Lower leg skin (tissue), 4 donors: ENCODE measurements at regions of chr2 and their contacts with region 1.

Region 1: GRCh38 chr2:205766779-205767359 is 84.6 kb downstream of the NRP2 start:
- DNase-seq: peak in 1 of 2 donors; percentile 58
- H3K4me3 ChIP-seq: no peak overlapping the region
- CTCF ChIP-seq: no peak
- POLR2A ChIP-seq: no peak

Region 2: DNA sequence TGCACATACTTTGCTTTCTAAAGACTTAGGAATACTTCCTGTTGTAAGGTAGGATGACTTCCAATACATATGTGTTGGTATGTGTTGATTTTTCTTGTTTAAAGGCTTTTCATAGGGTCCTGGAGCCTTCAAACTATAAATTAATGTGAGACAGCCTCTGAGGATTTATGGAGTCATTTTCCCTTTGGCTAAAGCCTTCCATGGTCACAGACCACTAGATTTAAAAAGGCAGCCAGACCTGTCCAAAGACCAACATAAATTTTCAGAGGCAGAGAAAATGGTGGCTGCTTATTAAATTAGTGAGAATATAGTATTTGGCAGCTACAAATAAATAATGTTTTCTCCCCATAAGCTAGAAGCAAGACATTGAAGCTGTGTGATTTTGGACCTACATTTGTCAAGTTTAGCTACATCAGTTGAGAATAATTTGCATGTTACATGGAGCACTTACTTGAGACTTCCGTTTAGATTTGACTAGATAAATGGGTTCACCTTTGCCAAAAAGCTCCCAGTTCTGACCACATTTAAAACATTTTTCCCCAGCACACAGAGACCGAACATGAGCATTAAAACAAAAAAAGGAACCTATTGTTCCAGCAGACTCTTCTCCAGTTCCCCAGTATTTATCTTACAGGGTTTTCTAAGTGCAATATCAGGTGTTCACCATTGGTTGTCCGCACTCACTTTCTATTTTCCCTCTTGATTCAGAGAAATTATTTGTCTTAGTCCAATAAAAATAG is 818.7 kb before region 1 on chr2:
- intact Hi-C with region 1: no loop called
- DNase-seq: no peak
- H3K4me3 ChIP-seq: no peak overlapping the region
- CTCF ChIP-seq: no peak
- POLR2A ChIP-seq: no peak

Region 3: GRCh38 chr2:205885492-205886099 is 118.7 kb after region 1 on chr2:
- intact Hi-C with region 1: loop called (anchors 10 kb)
- DNase-seq: peak; percentile 75 to 95
- H3K4me3 ChIP-seq: no peak overlapping the region
- CTCF ChIP-seq: peak in 1 of 3 donors; percentile 71
- POLR2A ChIP-seq: no peak